Left colon (tissue), 2 donors: ENCODE measurements at regions of chr15 and their contacts with region 1.

Region 1: GRCh38 chr15:90482124-90483011 is 47.4 kb upstream of the CRTC3 start:
- DNase-seq: peak in 1 of 2 donors; percentile 45
- ATAC-seq: peak; percentile 67

Region 2: DNA sequence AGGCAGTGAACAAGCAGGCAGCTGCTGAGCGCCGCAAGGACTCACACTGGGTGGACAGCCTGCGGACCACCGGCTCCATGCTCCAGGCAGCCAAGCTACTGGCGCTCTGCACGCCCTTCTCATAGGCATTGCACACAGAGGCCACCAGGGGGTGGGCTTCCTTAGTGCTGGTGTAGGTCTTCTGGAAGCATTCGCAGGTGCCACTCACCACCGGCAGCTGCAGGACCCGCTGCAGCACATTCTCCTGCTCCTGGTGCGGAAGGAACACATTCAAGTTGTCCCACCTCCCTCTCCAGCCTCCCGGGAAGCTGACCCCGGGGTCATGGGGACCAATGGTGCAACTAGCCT is 809.2 kb before region 1 on chr15:
- intact Hi-C with region 1: no loop called
- DNase-seq: no peak
- ATAC-seq: no peak

Region 3: DNA sequence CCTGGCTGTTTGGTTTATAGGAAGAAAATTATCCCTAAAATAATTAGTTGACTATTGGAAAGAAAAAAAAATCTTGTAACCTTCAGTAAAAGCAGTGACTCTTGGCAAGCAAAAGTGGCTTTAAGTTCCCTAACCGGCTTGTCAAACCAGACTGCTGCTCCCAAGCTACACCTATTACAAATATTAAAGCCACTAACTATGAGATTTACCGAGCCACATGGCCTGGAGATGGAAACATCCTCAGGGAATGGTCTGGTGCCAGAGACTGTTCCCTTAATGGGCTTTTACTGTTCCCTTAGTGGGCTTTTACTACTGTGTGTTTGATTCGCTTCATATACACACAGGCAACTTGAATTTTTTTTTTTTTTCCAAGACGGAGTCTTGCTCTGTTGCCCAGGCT is 166.2 kb before region 1 on chr15:
- intact Hi-C with region 1: loop called in 1 of 2 experiments (anchors 2 kb)
- DNase-seq: no peak
- ATAC-seq: peak; percentile 29